ENCODE measurements at regions of chr1 and their contacts with region 1.

Region 1: GRCh38 chr1:145845514-145846161 is at the start of gene NUDT17:
- DNase-seq: no peak
- ATAC-seq: peak; percentile 87
- H3K4me3 ChIP-seq: peak within 1 kb of the TSS; percentile 89
- H3K27ac ChIP-seq: peak within 1 kb of the TSS; percentile 83
- H3K4me1 ChIP-seq: peaks cover 15% of the 10 kb centered on the region
- H3K27me3 ChIP-seq: no peaks in the 10 kb centered on the region
- CTCF ChIP-seq: peak; percentile 87 to 94 (median 92)
- EP300 ChIP-seq: no peak
- POLR2A ChIP-seq: peak; percentile 81
- RAD21 ChIP-seq: peak; percentile 44
- polyA plus RNA-seq, gene NUDT17: 1.2 to 2.6 TPM

Region 2: GRCh38 chr1:145701306-145701862 is 144.3 kb before region 1 on chr1:
- CTCF ChIA-PET with region 1: no interaction called
- POLR2A ChIA-PET with region 1: no interaction called
- RAD21 ChIA-PET with region 1: no interaction called
- SMC1A ChIA-PET with region 1: no interaction called
- in situ Hi-C with region 1: no loop called
- intact Hi-C with region 1: no loop called
- DNase-seq: no peak
- ATAC-seq: no peak
- H3K4me3 ChIP-seq: no peak overlapping the region
- H3K27ac ChIP-seq: no peak overlapping the region
- H3K4me1 ChIP-seq: no peaks in the 10 kb centered on the region
- H3K27me3 ChIP-seq: no peaks in the 10 kb centered on the region
- CTCF ChIP-seq: no peak
- EP300 ChIP-seq: no peak
- POLR2A ChIP-seq: no peak
- RAD21 ChIP-seq: no peak

Region 3: DNA sequence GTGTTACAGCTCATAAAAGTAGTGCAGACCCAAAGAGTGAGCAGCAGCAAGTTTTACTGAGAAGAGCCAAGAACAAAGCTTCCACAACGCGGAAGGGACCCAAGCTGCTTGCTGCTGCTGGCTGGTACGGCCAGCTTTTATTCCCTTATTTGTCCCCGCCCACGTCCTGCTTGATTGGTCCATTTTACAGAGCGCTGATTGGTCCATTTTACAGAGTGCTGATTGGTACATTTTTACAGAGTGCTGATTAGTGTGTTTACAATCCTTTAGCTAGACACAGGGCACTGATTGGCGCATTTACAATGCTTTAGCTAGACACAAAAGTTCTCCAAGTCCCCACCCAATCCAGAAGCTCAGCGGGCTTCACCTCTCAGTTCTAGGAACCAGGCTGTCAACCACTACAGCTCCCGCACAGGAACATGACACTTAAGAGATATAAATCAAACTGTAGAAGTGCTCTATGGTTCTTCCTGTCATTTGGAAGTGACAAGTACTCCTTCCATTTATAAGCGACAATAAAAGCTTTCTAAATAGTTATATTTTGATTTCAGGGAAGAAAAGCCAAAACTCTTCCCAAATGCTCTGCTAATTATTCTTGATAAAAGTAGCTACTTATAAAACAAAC is 50.3 kb before region 1 on chr1:
- CTCF ChIA-PET with region 1: no interaction called
- POLR2A ChIA-PET with region 1: no interaction called
- RAD21 ChIA-PET with region 1: no interaction called
- SMC1A ChIA-PET with region 1: no interaction called
- in situ Hi-C with region 1: no loop called
- intact Hi-C with region 1: no loop called
- DNase-seq: no peak
- ATAC-seq: no peak
- H3K4me3 ChIP-seq: no peak overlapping the region
- H3K27ac ChIP-seq: no peak overlapping the region
- H3K4me1 ChIP-seq: peaks cover 4% of the 10 kb centered on the region
- H3K27me3 ChIP-seq: no peaks in the 10 kb centered on the region
- CTCF ChIP-seq: no peak
- EP300 ChIP-seq: no peak
- POLR2A ChIP-seq: no peak
- RAD21 ChIP-seq: no peak

Region 4: DNA sequence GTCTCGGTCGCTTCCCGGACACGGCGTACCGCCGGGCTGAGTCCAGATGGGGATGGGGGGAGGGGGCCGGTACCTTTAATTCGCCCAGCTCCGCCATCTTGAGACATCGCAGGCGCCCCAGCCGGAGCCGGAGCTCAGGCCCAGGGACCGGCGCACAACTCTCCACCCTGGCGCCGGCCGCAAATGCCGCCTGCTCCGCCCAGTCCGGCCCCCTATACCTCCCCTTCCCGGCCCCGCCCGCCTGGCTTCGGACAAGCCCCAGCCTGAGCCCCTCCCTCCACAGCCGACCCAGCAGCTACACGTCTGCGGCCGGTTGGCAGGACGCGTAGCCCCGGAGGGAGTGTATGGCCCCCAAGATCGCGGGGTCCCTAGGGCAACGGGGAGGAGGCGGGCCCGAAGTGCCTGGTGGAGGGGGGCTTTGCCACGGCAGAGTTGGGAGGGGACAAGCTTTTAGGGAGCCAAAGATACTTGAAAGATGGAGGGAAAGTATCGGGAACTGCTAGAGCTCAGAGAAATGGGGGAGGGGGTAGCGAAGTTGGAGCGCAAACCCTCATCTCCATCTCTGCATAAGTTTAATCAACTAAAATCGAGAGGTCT is 13.4 kb after region 1 on chr1 and contains the start of gene PIAS3:
- CTCF ChIA-PET with region 1: interaction called, 172 read pairs
- POLR2A ChIA-PET with region 1: interaction called, 24 read pairs
- RAD21 ChIA-PET with region 1: interaction called, 69 read pairs
- SMC1A ChIA-PET with region 1: interaction called, 54 read pairs
- in situ Hi-C with region 1: no loop called
- intact Hi-C with region 1: no loop called
- DNase-seq: peak; percentile 65
- ATAC-seq: peak; percentile 93
- H3K4me3 ChIP-seq: peak within 1 kb of the TSS; percentile 82
- H3K27ac ChIP-seq: peak within 1 kb of the TSS; percentile 67
- H3K4me1 ChIP-seq: no peaks in the 10 kb centered on the region
- H3K27me3 ChIP-seq: no peaks in the 10 kb centered on the region
- CTCF ChIP-seq: no peak
- EP300 ChIP-seq: 0 out of 4 replicates have a peak, but pooled peaks of 1 of the 2 experiments have one; percentile 12
- POLR2A ChIP-seq: peak; percentile 68
- RAD21 ChIP-seq: no peak
- polyA plus RNA-seq, gene PIAS3: 0.85 to 1.6 TPM

Region 5: GRCh38 chr1:145891587-145892485 is 46.2 kb after region 1 on chr1:
- CTCF ChIA-PET with region 1: interaction called, 40 read pairs
- POLR2A ChIA-PET with region 1: no interaction called
- RAD21 ChIA-PET with region 1: interaction called, 7 read pairs
- SMC1A ChIA-PET with region 1: interaction called, 4 read pairs
- in situ Hi-C with region 1: no loop called
- intact Hi-C with region 1: no loop called
- DNase-seq: no peak
- ATAC-seq: peak; percentile 95
- H3K4me3 ChIP-seq: no peak overlapping the region
- H3K27ac ChIP-seq: no peak overlapping the region
- H3K4me1 ChIP-seq: no peaks in the 10 kb centered on the region
- H3K27me3 ChIP-seq: no peaks in the 10 kb centered on the region
- CTCF ChIP-seq: peak; percentile 89 to 90 (median 90)
- EP300 ChIP-seq: no peak
- POLR2A ChIP-seq: no peak
- RAD21 ChIP-seq: peak; percentile 81

Region 6: GRCh38 chr1:145927063-145927886 is 81.6 kb after region 1 on chr1 and contains the start of gene RBM8A:
- CTCF ChIA-PET with region 1: interaction called, 3 read pairs
- POLR2A ChIA-PET with region 1: interaction called, 10 read pairs
- RAD21 ChIA-PET with region 1: interaction called, 4 read pairs
- SMC1A ChIA-PET with region 1: no interaction called
- in situ Hi-C with region 1: no loop called
- intact Hi-C with region 1: no loop called
- DNase-seq: peak; percentile 99
- ATAC-seq: peak; percentile 98
- H3K4me3 ChIP-seq: peak within 1 kb of the TSS; percentile 90
- H3K27ac ChIP-seq: peak within 1 kb of the TSS; percentile 97
- H3K4me1 ChIP-seq: peaks cover 6% of the 10 kb centered on the region; the same call in 1 of the 2 replicates
- H3K27me3 ChIP-seq: no peaks in the 10 kb centered on the region
- CTCF ChIP-seq: peak; percentile 37 to 67 (median 58)
- EP300 ChIP-seq: 0 out of 4 replicates have a peak, but pooled peaks of 1 of the 2 experiments have one; percentile 11
- POLR2A ChIP-seq: peak; percentile 95
- RAD21 ChIP-seq: no peak
- polyA plus RNA-seq, gene RBM8A: 665 to 1,248 TPM

Region 7: DNA sequence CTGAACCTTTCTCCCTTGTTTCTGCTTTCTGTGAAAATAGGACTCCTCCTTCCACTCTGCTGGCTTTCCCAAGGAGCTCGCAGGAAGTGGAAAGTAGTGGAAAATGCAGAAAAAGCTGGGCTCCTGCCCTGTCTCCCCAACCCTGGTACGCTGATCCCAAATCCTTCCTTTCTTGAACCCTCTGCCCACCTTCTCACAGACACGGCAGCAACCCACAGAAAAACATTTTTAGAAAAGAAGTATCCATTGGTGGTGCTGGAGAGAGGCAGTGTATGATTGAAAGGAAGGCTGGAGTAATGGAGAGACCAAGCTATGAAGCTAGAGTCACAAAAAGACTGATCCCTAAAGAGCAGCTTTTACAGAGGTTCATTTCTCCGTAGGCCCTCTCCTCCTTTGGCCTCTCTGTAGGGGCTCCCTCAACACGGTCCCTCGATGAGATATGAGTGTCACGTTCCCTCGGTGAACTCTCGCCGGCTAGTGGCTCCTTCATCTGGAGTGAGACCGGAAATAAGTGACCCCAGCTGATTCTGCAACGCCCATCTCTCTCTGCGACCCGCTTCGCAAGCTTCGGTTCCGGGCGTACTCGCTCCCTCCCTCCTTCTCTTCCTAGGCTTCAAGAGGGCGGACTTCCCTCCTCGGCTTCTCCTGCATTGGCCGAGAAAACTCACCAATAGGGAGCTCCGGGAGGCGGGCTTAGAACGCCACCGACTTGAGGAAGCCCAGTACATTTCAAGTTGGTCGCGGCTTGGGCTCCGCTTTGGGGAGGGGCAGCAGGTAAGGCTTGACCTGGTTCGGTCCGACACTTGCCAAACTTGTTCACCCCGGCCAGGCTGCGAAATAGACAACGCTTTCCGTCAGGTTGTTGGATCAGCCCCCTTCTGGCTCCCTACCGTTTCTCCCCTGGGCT is 118.6 kb after region 1 on chr1 and contains the starts of genes ANKRD34A and POLR3GL:
- CTCF ChIA-PET with region 1: interaction called, 13 read pairs
- POLR2A ChIA-PET with region 1: interaction called, 4 read pairs
- RAD21 ChIA-PET with region 1: interaction called, 11 read pairs
- SMC1A ChIA-PET with region 1: no interaction called
- in situ Hi-C with region 1: no loop called
- intact Hi-C with region 1: no loop called
- DNase-seq: peak; percentile 80
- ATAC-seq: peak; percentile 95
- H3K4me3 ChIP-seq: peak within 1 kb of the TSS; percentile 79
- H3K27ac ChIP-seq: peak within 1 kb of the TSS; percentile 73
- H3K4me1 ChIP-seq: peaks cover 19% of the 10 kb centered on the region
- H3K27me3 ChIP-seq: no peaks in the 10 kb centered on the region; a peak in 1 of 4 replicates
- CTCF ChIP-seq: no peak
- EP300 ChIP-seq: no peak
- POLR2A ChIP-seq: peak; percentile 98
- RAD21 ChIP-seq: no peak
- polyA plus RNA-seq, gene ANKRD34A: 0.40 to 0.42 TPM
- polyA plus RNA-seq, gene POLR3GL: 12.8 to 25.5 TPM

Region 8: GRCh38 chr1:146012737-146013403 is 167.2 kb after region 1 on chr1:
- CTCF ChIA-PET with region 1: interaction called, 16 read pairs
- POLR2A ChIA-PET with region 1: interaction called, 5 read pairs
- RAD21 ChIA-PET with region 1: interaction called, 4 read pairs
- SMC1A ChIA-PET with region 1: interaction called, 18 read pairs
- in situ Hi-C with region 1: loop called (anchors 5 kb)
- intact Hi-C with region 1: loop called (anchors 1 kb)
- DNase-seq: no peak
- ATAC-seq: peak; percentile 84
- H3K4me3 ChIP-seq: no peak overlapping the region
- H3K27ac ChIP-seq: no peak overlapping the region
- H3K4me1 ChIP-seq: no peaks in the 10 kb centered on the region
- H3K27me3 ChIP-seq: peaks cover 0 to 1% of the 10 kb centered on the region in 2 experiments; a peak in 3 of 4 replicates
- CTCF ChIP-seq: peak; percentile 68 to 89 (median 76); a peak in 5 of 6 replicates
- EP300 ChIP-seq: no peak
- POLR2A ChIP-seq: no peak
- RAD21 ChIP-seq: peak; percentile 98